Ovary (tissue), 10 donors: ENCODE measurements at regions of chr5 and their contacts with region 1.

Region 1: GRCh38 chr5:56838409-56839039 is 23.2 kb downstream of the MAP3K1 start:
- DNase-seq: no peak
- H3K4me3 ChIP-seq: no peak overlapping the region
- H3K27ac ChIP-seq: no peak overlapping the region
- H3K4me1 ChIP-seq: peaks cover 2% of the 10 kb centered on the region
- H3K27me3 ChIP-seq: no peaks in the 10 kb centered on the region
- CTCF ChIP-seq: peak in 2 of 3 donors; percentile 50 to 60
- EP300 ChIP-seq: no peak
- POLR2A ChIP-seq: no peak

Region 2: DNA sequence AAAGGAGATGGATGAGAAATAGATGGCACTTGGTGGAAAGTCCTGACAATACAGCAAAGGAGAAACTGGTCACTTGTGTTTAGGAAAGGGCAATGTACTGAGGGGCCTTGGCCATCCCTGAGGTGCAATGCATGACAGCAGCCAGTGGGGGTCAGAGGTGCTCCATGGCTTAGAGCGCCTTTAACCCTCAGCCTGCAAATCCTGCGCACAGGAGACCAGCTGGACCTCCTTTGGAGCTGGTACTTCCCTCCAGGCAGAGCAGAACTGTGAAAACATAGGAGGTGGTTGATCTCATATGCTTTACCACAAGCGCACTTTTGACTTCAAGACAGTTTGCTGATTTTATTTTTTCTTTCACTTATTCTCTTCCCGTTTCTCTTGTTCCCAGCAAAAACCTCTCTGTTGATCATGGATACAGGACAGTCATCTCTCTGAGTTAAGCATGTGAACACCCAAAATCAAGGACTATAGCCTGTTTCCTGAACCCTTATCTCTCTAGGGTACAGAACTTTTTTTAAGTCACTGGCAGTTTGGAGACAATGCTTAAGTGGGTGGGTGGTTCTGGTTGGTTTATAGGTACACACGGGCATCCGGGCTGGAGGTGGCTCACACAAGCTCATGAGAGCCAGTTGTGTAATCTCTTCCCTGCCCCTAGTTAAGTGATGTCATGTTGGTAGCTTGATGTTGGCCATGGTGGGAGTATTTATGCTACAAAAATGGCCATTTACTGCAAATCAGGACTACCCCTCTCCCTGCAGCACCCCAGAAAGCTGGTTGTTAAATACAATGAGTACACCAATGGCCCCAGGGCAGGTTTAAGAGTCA is 567.7 kb before region 1 on chr5:
- intact Hi-C with region 1: loop called (anchors 5 to 10 kb)
- DNase-seq: peak; percentile 80 to 89 (median 84)
- H3K4me3 ChIP-seq: no peak overlapping the region
- H3K27ac ChIP-seq: no peak overlapping the region
- H3K4me1 ChIP-seq: peaks cover 2% of the 10 kb centered on the region
- H3K27me3 ChIP-seq: no peaks in the 10 kb centered on the region
- CTCF ChIP-seq: peak; percentile 86 to 92 (median 91)
- EP300 ChIP-seq: no peak
- POLR2A ChIP-seq: no peak